ENCODE measurements at regions of chr6 and their contacts with region 1.

Region 1: GRCh38 chr6:56955171-56956045 is 501 bp downstream of the BEND6 start:
- DNase-seq: peak; percentile 62
- ATAC-seq: peak; percentile 79
- H3K4me3 ChIP-seq: peak overlapping the region; percentile 79
- H3K27ac ChIP-seq: peak overlapping the region; percentile 91
- H3K4me1 ChIP-seq: peaks cover 17% of the 10 kb centered on the region
- H3K27me3 ChIP-seq: no peaks in the 10 kb centered on the region
- CTCF ChIP-seq: peak; percentile 75 to 90 (median 80)
- EP300 ChIP-seq: no peak
- POLR2A ChIP-seq: peak; percentile 60
- RAD21 ChIP-seq: peak; percentile 62

Region 2: GRCh38 chr6:56890683-56891429 is 64.6 kb before region 1 on chr6:
- CTCF ChIA-PET with region 1: interaction called, 11 read pairs
- POLR2A ChIA-PET with region 1: interaction called, 4 read pairs
- RAD21 ChIA-PET with region 1: no interaction called
- SMC1A ChIA-PET with region 1: interaction called, 5 read pairs
- in situ Hi-C with region 1: no loop called
- intact Hi-C with region 1: no loop called
- DNase-seq: peak; percentile 92
- ATAC-seq: peak; percentile 94
- H3K4me3 ChIP-seq: peak overlapping the region; percentile 43; the same call in 1 of the 2 replicates
- H3K27ac ChIP-seq: peak overlapping the region; percentile 95
- H3K4me1 ChIP-seq: peaks cover 30% of the 10 kb centered on the region
- H3K27me3 ChIP-seq: no peaks in the 10 kb centered on the region
- CTCF ChIP-seq: no peak
- EP300 ChIP-seq: peak; percentile 78 to 86; a peak in 3 of 4 replicates
- POLR2A ChIP-seq: no peak
- RAD21 ChIP-seq: no peak

Region 3: GRCh38 chr6:56914798-56915658 is 40.4 kb before region 1 on chr6:
- CTCF ChIA-PET with region 1: interaction called, 8 read pairs
- POLR2A ChIA-PET with region 1: interaction called, 6 read pairs
- RAD21 ChIA-PET with region 1: no interaction called
- SMC1A ChIA-PET with region 1: interaction called, 12 read pairs
- in situ Hi-C with region 1: no loop called
- intact Hi-C with region 1: no loop called
- DNase-seq: no peak
- ATAC-seq: peak; percentile 29; the same call in 1 of the 3 replicates
- H3K4me3 ChIP-seq: no peak overlapping the region
- H3K27ac ChIP-seq: no peak overlapping the region
- H3K4me1 ChIP-seq: peaks cover 4% of the 10 kb centered on the region
- H3K27me3 ChIP-seq: no peaks in the 10 kb centered on the region
- CTCF ChIP-seq: no peak
- EP300 ChIP-seq: no peak
- POLR2A ChIP-seq: no peak
- RAD21 ChIP-seq: no peak

Region 4: DNA sequence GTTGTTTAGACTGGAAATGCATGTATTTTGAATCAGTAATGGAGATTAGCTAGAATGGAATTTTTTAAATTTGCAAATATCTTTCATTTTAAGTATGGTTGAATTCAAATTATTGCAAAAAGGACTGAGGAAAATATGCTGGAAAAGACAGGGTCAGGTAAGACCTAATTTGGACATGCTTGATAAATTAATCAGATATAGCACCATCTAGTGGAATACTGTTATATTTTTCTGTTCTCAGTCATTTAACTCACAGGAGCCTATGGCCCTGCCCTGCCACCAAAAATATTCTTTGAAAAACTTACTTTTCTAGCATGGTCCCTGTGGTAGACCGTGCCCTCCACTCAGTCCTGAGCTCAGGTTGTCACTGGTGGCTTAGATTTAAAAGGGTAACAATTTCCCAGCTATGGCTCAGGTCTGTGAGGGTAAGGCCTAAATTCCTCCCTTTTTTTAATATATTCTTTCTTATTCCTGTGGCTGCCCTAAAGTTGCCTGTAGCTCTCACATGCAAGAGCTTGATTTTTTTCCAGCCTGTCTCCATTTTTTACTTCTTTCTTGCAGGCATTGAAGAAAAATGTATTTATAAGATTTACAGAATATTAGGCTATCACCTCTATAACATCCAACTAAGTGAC is 65.8 kb after region 1 on chr6:
- CTCF ChIA-PET with region 1: interaction called, 7 read pairs
- POLR2A ChIA-PET with region 1: no interaction called
- RAD21 ChIA-PET with region 1: interaction called, 5 read pairs
- SMC1A ChIA-PET with region 1: interaction called, 4 read pairs
- in situ Hi-C with region 1: no loop called
- intact Hi-C with region 1: loop called (anchors 1 kb)
- DNase-seq: no peak
- ATAC-seq: peak; percentile 94
- H3K4me3 ChIP-seq: no peak overlapping the region
- H3K27ac ChIP-seq: no peak overlapping the region
- H3K4me1 ChIP-seq: no peaks in the 10 kb centered on the region
- H3K27me3 ChIP-seq: no peaks in the 10 kb centered on the region
- CTCF ChIP-seq: peak; percentile 38 to 47 (median 43); a peak in 4 of 6 replicates
- EP300 ChIP-seq: no peak
- POLR2A ChIP-seq: no peak
- RAD21 ChIP-seq: peak; percentile 27; the same call in 1 of the 2 replicates

Region 5: GRCh38 chr6:57048577-57048976 is 93.2 kb after region 1 on chr6:
- CTCF ChIA-PET with region 1: interaction called, 6 read pairs
- POLR2A ChIA-PET with region 1: interaction called, 3 read pairs
- RAD21 ChIA-PET with region 1: no interaction called
- SMC1A ChIA-PET with region 1: interaction called, 3 read pairs
- in situ Hi-C with region 1: no loop called
- intact Hi-C with region 1: loop called (anchors 5 kb)
- DNase-seq: no peak
- ATAC-seq: no peak
- H3K4me3 ChIP-seq: peak overlapping the region; percentile 65; the same call in 1 of the 2 replicates
- H3K27ac ChIP-seq: no peak overlapping the region
- H3K4me1 ChIP-seq: peaks cover 5% of the 10 kb centered on the region; the same call in 1 of the 2 replicates
- H3K27me3 ChIP-seq: no peaks in the 10 kb centered on the region
- CTCF ChIP-seq: no peak
- EP300 ChIP-seq: no peak
- POLR2A ChIP-seq: no peak
- RAD21 ChIP-seq: no peak

Region 6: GRCh38 chr6:57172136-57173055 is 217.0 kb after region 1 on chr6 and contains the start of gene BAG2:
- CTCF ChIA-PET with region 1: no interaction called
- POLR2A ChIA-PET with region 1: interaction called, 3 read pairs
- RAD21 ChIA-PET with region 1: no interaction called
- SMC1A ChIA-PET with region 1: interaction called, 3 read pairs
- in situ Hi-C with region 1: no loop called
- intact Hi-C with region 1: loop called (anchors 2 kb)
- DNase-seq: peak; percentile 68
- ATAC-seq: peak; percentile 91
- H3K4me3 ChIP-seq: peak within 1 kb of the TSS; percentile 84
- H3K27ac ChIP-seq: peak within 1 kb of the TSS; percentile 86
- H3K4me1 ChIP-seq: no peaks in the 10 kb centered on the region
- H3K27me3 ChIP-seq: no peaks in the 10 kb centered on the region
- CTCF ChIP-seq: 0 out of 6 replicates have a peak, but pooled peaks have one; percentile 10 to 19 (median 18)
- EP300 ChIP-seq: no peak
- POLR2A ChIP-seq: peak; percentile 95
- RAD21 ChIP-seq: no peak
- polyA plus RNA-seq, gene BAG2: 8.9 to 10.8 TPM

Measured in GM12878 (cell line).